B cell (primary cell): ENCODE measurements at regions of chr19 and their contacts with region 1.

Region 1: DNA sequence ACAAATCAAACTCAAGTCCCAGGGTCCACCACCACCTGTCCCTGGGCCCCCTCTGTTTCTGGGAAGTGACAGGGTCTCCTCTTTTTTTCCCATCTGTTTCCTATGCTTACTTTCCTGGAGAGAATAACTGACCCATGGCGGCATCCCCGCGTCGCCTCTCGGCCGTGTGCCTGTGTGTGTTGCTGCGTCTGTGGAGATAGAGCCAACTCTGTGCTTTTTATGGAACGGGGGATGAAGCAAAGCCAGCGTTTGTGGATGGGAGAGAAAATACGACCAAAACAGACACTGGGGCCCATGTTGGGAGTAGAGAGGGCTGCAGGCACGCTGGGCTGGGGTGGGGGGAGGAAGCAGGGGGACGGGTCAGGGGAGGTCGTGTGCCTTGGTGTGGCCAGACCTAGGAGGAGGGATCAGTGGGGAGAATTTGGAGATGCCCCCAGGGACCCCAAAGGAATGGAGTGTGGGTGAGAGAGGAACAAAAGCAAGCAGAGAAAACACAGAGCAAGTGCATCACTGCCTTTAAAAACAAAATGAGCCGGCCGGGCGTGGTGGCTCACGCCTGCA is 16.6 kb downstream of the PLK5 start:
- DNase-seq: no peak
- ATAC-seq: no peak
- H3K4me3 ChIP-seq: no peak overlapping the region
- H3K4me3 Mint-ChIP-seq: no peak overlapping the region
- H3K27ac ChIP-seq: no peak overlapping the region
- H3K27ac Mint-ChIP-seq: no peak overlapping the region
- H3K4me1 ChIP-seq: no peaks in the 10 kb centered on the region
- H3K4me1 Mint-ChIP-seq: no peaks in the 10 kb centered on the region
- H3K27me3 ChIP-seq: peaks cover 0 to 25% (median 3%) of the 10 kb centered on the region in 4 experiments
- H3K27me3 Mint-ChIP-seq: peaks cover 17% of the 10 kb centered on the region
- CTCF ChIP-seq: no peak

Region 2: DNA sequence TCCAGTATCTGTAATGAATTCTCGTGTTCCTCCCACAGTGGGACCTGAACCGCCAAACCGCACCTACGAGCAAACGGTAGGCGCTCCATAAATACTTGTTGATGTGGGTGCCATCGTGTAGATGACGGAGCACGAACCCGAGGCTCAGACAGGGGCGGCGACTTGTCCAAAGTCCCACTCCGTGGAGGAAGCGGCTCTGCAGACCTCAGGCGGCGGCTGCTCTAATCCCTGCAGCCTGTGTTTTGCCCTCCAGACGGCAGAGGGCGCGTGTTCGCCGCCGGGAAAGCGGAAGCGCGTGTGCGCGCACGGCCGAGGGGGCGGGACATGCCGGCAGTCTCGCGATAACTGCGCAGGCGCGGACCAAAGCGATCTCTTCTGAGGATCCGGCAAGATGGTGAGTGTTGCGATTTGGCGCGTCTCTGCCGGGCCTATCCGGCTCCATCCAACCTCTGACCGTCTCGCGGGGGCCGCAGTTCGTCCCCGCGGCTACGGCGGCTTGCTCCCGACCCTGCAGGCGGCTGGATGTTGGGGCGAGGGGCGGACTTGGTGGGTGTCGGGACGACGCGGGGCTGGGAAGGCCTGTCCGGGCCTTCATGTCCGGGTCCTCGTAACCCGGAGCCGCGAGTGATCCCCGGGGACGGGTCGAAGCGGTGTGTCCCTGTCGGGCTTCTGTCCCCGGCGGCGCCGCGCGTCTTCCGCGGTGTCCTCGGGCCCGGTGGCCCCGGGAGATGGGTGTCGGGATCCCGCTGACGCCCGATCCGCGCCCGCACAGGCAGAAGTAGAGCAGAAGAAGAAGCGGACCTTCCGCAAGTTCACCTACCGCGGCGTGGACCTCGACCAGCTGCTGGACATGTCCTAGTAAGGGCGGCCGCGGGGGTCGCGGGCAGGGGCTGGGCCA is 102.2 kb before region 1 on chr19 and contains the start of gene RPS15:
- CTCF ChIA-PET with region 1: no interaction called
- POLR2A ChIA-PET with region 1: no interaction called
- intact Hi-C with region 1: no loop called
- DNase-seq: peak; percentile 98
- ATAC-seq: peak; percentile 94
- H3K4me3 ChIP-seq: peak within 1 kb of the TSS; percentile 45 to 100 (median 97)
- H3K4me3 Mint-ChIP-seq: peak within 1 kb of the TSS; percentile 99
- H3K27ac ChIP-seq: peak within 1 kb of the TSS; percentile 94 to 95
- H3K27ac Mint-ChIP-seq: peak within 1 kb of the TSS; percentile 99
- H3K4me1 ChIP-seq: peaks cover 7 to 16% of the 10 kb centered on the region in 2 donors
- H3K4me1 Mint-ChIP-seq: peaks cover 18% of the 10 kb centered on the region
- H3K27me3 ChIP-seq: no peaks in the 10 kb centered on the region
- H3K27me3 Mint-ChIP-seq: no peaks in the 10 kb centered on the region
- CTCF ChIP-seq: peak; percentile 95
- total RNA-seq, gene RPS15: 1,488 and 1,520 TPM in 2 replicates

Region 3: GRCh38 chr19:1507763-1508509 is 32.5 kb before region 1 on chr19:
- CTCF ChIA-PET with region 1: no interaction called
- POLR2A ChIA-PET with region 1: no interaction called
- intact Hi-C with region 1: no loop called
- DNase-seq: peak; percentile 93
- ATAC-seq: peak; percentile 91
- H3K4me3 ChIP-seq: peak overlapping the region in 4 of 5 experiments; percentile 18 to 45 (median 42)
- H3K4me3 Mint-ChIP-seq: peak overlapping the region; percentile 85
- H3K27ac ChIP-seq: no peak overlapping the region
- H3K27ac Mint-ChIP-seq: peak overlapping the region; percentile 88
- H3K4me1 ChIP-seq: peaks cover 19 to 24% of the 10 kb centered on the region in 2 donors
- H3K4me1 Mint-ChIP-seq: peaks cover 12% of the 10 kb centered on the region
- H3K27me3 ChIP-seq: peaks cover 0 to 79% (median 20%) of the 10 kb centered on the region in 4 experiments
- H3K27me3 Mint-ChIP-seq: peaks cover 41% of the 10 kb centered on the region
- CTCF ChIP-seq: no peak

Region 4: GRCh38 chr19:1577090-1577928 is 36.9 kb after region 1 on chr19:
- CTCF ChIA-PET with region 1: no interaction called
- POLR2A ChIA-PET with region 1: no interaction called
- intact Hi-C with region 1: no loop called
- DNase-seq: no peak
- ATAC-seq: no peak
- H3K4me3 ChIP-seq: no peak overlapping the region
- H3K4me3 Mint-ChIP-seq: no peak overlapping the region
- H3K27ac ChIP-seq: no peak overlapping the region
- H3K27ac Mint-ChIP-seq: no peak overlapping the region
- H3K4me1 ChIP-seq: no peaks in the 10 kb centered on the region
- H3K4me1 Mint-ChIP-seq: no peaks in the 10 kb centered on the region
- H3K27me3 ChIP-seq: no peaks in the 10 kb centered on the region
- H3K27me3 Mint-ChIP-seq: no peaks in the 10 kb centered on the region
- CTCF ChIP-seq: no peak

Region 5: DNA sequence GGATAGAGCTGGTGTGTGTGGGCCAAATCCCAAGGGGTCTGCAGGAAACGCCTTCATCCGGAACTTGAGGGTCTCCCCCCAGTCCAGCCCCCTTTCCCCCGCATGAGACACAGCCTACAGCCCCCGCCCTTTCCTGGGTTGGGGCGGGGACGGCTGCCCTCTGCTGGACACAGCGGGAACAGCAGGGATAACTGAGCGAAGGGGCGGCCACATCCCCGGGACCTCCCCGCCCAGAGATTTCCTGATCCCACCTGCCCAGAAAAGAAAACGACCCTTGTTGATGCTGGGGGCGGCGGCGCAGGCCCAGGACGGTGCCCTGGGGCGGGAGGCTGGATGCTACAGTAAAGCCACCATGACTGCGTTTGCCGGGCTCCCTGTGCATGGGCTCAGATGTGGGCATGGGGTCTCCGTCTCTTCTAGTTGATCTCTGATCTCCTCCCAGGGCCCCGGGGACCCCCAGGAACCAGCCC is 227.1 kb after region 1 on chr19:
- CTCF ChIA-PET with region 1: interaction called, 38 read pairs
- POLR2A ChIA-PET with region 1: no interaction called
- intact Hi-C with region 1: no loop called
- DNase-seq: peak; percentile 76
- ATAC-seq: peak; percentile 84
- H3K4me3 ChIP-seq: no peak overlapping the region
- H3K4me3 Mint-ChIP-seq: no peak overlapping the region
- H3K27ac ChIP-seq: no peak overlapping the region
- H3K27ac Mint-ChIP-seq: no peak overlapping the region
- H3K4me1 ChIP-seq: peaks cover 16 to 34% of the 10 kb centered on the region in 2 donors
- H3K4me1 Mint-ChIP-seq: peaks cover 4% of the 10 kb centered on the region
- H3K27me3 ChIP-seq: peaks cover 0 to 89% (median 69%) of the 10 kb centered on the region in 4 experiments
- H3K27me3 Mint-ChIP-seq: peaks cover 62% of the 10 kb centered on the region
- CTCF ChIP-seq: peak; percentile 93

Region 6: GRCh38 chr19:1773173-1773572 is 232.7 kb after region 1 on chr19:
- CTCF ChIA-PET with region 1: interaction called, 38 read pairs
- POLR2A ChIA-PET with region 1: no interaction called
- intact Hi-C with region 1: no loop called
- DNase-seq: no peak
- ATAC-seq: no peak
- H3K4me3 ChIP-seq: no peak overlapping the region
- H3K4me3 Mint-ChIP-seq: no peak overlapping the region
- H3K27ac ChIP-seq: no peak overlapping the region
- H3K27ac Mint-ChIP-seq: no peak overlapping the region
- H3K4me1 ChIP-seq: peaks cover 7 to 28% of the 10 kb centered on the region in 2 donors
- H3K4me1 Mint-ChIP-seq: peaks cover 5% of the 10 kb centered on the region
- H3K27me3 ChIP-seq: peaks cover 0 to 81% (median 58%) of the 10 kb centered on the region in 4 experiments
- H3K27me3 Mint-ChIP-seq: peaks cover 66% of the 10 kb centered on the region
- CTCF ChIP-seq: no peak

Region 7: DNA sequence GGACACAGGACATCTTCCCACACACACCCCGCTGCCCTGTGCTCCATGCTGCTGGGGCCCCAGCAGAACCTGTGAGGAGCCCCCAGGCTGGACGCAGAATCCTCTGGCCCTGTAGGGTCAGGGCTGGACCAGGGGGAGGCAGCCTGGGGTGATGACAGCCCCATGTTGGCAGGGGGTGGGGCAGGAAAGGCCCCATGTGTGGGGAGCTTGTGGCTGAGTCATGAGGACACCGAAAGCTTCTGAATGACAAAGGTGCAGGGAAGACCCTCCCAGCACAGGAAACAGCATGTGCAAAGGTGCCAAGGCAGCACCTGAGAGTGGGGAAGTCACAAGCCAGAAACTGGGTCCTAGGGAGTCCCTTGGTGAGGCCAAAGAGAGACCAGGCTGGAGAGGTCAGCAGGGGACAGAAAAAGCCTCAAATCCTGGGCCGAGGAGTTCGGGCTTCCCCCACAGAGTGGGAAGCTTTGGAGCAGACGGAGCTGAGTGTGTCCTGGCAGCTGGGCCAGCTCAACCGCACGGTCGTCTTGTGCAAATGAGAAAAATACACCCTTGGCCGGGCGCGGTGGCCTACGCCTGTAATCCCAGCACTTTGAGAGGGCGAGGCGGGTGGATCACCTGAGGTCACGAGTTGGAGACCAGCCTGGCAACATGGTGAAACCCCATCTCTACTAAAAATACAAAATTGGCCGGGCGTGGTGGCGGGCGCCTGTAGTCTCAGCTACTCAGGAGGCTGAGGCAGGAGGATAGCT is 254.2 kb after region 1 on chr19:
- CTCF ChIA-PET with region 1: interaction called, 48 read pairs
- POLR2A ChIA-PET with region 1: no interaction called
- intact Hi-C with region 1: no loop called
- DNase-seq: no peak
- ATAC-seq: no peak
- H3K4me3 ChIP-seq: no peak overlapping the region
- H3K4me3 Mint-ChIP-seq: no peak overlapping the region
- H3K27ac ChIP-seq: no peak overlapping the region
- H3K27ac Mint-ChIP-seq: no peak overlapping the region
- H3K4me1 ChIP-seq: peaks cover 8% of the 10 kb centered on the region in 2 donors
- H3K4me1 Mint-ChIP-seq: no peaks in the 10 kb centered on the region
- H3K27me3 ChIP-seq: peaks cover 0 to 37% (median 3%) of the 10 kb centered on the region in 4 experiments
- H3K27me3 Mint-ChIP-seq: peaks cover 4% of the 10 kb centered on the region
- CTCF ChIP-seq: no peak